ENCODE measurements at regions of chr6 and their contacts with region 1.

Region 1: GRCh38 chr6:42453031-42453653 is 1.4 kb upstream of the TRERF1 start:
- DNase-seq: peak; percentile 57 to 90 (median 75)
- ATAC-seq: peak; percentile 72
- H3K4me3 ChIP-seq: peak overlapping the region; percentile 96
- H3K4me3 Mint-ChIP-seq: peak overlapping the region; percentile 98
- H3K27ac ChIP-seq: peak overlapping the region in 1 of 2 donors; percentile 64
- H3K27ac Mint-ChIP-seq: peak overlapping the region; percentile 86
- H3K4me1 ChIP-seq: peaks cover 36% of the 10 kb centered on the region
- H3K4me1 Mint-ChIP-seq: peaks cover 51% of the 10 kb centered on the region
- H3K27me3 ChIP-seq: no peaks in the 10 kb centered on the region
- H3K27me3 Mint-ChIP-seq: no peaks in the 10 kb centered on the region
- CTCF ChIP-seq: no peak

Region 2: DNA sequence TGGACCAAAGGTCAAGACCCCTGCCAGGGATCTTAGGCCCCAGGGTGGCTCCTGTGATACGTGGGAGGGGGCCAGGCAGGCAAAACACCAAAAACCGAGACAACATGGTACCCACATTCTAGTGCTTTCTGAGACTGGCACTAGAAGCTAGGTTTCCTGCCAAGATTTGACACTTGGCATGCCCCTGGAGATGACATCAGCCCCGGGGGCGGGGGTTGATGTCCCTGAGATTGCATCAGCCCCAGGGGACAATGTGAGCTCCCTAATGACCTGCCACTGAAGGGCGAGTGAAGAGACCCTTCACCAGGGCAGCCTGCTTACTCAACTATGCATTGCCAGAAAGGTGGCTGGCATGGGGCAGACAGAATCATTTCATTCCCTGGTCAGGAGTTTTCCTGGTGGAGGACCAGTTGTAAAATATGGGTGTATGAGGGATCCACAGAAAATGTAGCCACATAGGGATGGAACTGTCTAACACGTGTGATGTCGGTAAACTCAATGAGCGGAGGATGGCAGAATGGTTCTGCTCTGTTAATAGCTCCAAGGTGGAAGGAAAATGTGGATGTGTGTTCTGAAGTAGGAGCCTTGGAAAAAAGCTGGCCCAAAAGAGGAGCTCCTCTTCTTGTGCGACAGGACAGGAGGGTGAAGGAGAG is 1633.8 kb before region 1 on chr6:
- CTCF ChIA-PET with region 1: no interaction called
- POLR2A ChIA-PET with region 1: no interaction called
- intact Hi-C with region 1: no loop called
- DNase-seq: no peak
- ATAC-seq: no peak
- H3K4me3 ChIP-seq: no peak overlapping the region
- H3K4me3 Mint-ChIP-seq: no peak overlapping the region
- H3K27ac ChIP-seq: no peak overlapping the region
- H3K27ac Mint-ChIP-seq: no peak overlapping the region
- H3K4me1 ChIP-seq: no peaks in the 10 kb centered on the region
- H3K4me1 Mint-ChIP-seq: no peaks in the 10 kb centered on the region
- H3K27me3 ChIP-seq: peaks cover 3 to 8% of the 10 kb centered on the region in 2 experiments
- H3K27me3 Mint-ChIP-seq: peaks cover 2% of the 10 kb centered on the region
- CTCF ChIP-seq: no peak

Region 3: GRCh38 chr6:42304053-42304712 is 149.0 kb before region 1 on chr6:
- CTCF ChIA-PET with region 1: no interaction called
- POLR2A ChIA-PET with region 1: interaction called, 3 read pairs
- intact Hi-C with region 1: loop called in 1 of 2 experiments (anchors 10 kb)
- DNase-seq: no peak
- ATAC-seq: no peak
- H3K4me3 ChIP-seq: no peak overlapping the region
- H3K4me3 Mint-ChIP-seq: no peak overlapping the region
- H3K27ac ChIP-seq: no peak overlapping the region
- H3K27ac Mint-ChIP-seq: peak overlapping the region; percentile 18
- H3K4me1 ChIP-seq: peaks cover 6% of the 10 kb centered on the region
- H3K4me1 Mint-ChIP-seq: peaks cover 56% of the 10 kb centered on the region
- H3K27me3 ChIP-seq: no peaks in the 10 kb centered on the region
- H3K27me3 Mint-ChIP-seq: no peaks in the 10 kb centered on the region
- CTCF ChIP-seq: no peak

Region 4: GRCh38 chr6:42315991-42316378 is 137.2 kb before region 1 on chr6:
- CTCF ChIA-PET with region 1: no interaction called
- POLR2A ChIA-PET with region 1: no interaction called
- intact Hi-C with region 1: no loop called
- DNase-seq: peak in 2 of 14 experiments; percentile 55 to 70
- ATAC-seq: no peak
- H3K4me3 ChIP-seq: no peak overlapping the region
- H3K4me3 Mint-ChIP-seq: no peak overlapping the region
- H3K27ac ChIP-seq: no peak overlapping the region
- H3K27ac Mint-ChIP-seq: peak overlapping the region; percentile 75
- H3K4me1 ChIP-seq: peaks cover 37% of the 10 kb centered on the region
- H3K4me1 Mint-ChIP-seq: peaks cover 60% of the 10 kb centered on the region
- H3K27me3 ChIP-seq: no peaks in the 10 kb centered on the region
- H3K27me3 Mint-ChIP-seq: no peaks in the 10 kb centered on the region
- CTCF ChIP-seq: no peak

Region 5: GRCh38 chr6:42374018-42374659 is 79.0 kb before region 1 on chr6:
- CTCF ChIA-PET with region 1: no interaction called
- POLR2A ChIA-PET with region 1: interaction called, 14 read pairs
- intact Hi-C with region 1: loop called in 1 of 2 experiments (anchors 5 kb)
- DNase-seq: peak in 2 of 14 experiments; percentile 42 to 64
- ATAC-seq: peak; percentile 67
- H3K4me3 ChIP-seq: no peak overlapping the region
- H3K4me3 Mint-ChIP-seq: peak overlapping the region; percentile 55
- H3K27ac ChIP-seq: peak overlapping the region in 1 of 2 donors; percentile 3
- H3K27ac Mint-ChIP-seq: peak overlapping the region; percentile 93
- H3K4me1 ChIP-seq: peaks cover 61% of the 10 kb centered on the region
- H3K4me1 Mint-ChIP-seq: peaks cover 67% of the 10 kb centered on the region
- H3K27me3 ChIP-seq: no peaks in the 10 kb centered on the region
- H3K27me3 Mint-ChIP-seq: no peaks in the 10 kb centered on the region
- CTCF ChIP-seq: no peak

Region 6: DNA sequence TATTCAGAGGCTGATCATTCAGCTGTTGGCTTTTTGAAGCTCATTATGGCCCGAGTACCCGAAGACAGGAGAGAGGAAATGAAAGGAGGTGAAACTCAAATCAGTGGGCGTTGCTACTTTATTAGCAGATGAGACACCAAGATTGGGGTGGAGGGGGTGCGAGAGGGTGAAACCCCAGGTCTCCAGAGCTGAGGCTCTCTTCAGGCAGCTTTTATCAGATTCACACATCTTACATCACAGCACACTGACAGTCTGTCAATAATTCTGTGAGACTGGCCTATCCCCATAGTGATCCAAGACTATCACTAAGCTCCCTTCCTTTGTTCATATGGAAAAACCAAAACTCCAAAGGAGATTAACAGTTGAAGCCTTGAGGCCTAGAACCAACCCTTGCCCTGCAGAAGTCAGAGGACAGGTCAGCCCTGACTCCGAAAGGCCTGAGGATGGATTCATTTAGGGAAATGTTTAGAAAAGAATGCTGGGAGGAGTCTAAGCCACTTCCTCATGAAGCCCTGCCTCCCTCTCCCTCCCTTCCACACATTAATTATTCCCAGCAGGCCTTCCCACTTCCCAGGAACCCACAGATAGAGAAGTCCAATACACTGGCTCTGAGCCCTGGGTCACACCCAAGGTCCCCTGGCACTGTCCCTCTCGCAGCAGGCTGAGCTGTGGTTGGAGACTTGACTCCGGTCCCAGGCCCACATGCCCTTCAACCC is 24.7 kb before region 1 on chr6:
- CTCF ChIA-PET with region 1: interaction called, 4 read pairs
- POLR2A ChIA-PET with region 1: interaction called, 16 read pairs
- intact Hi-C with region 1: no loop called
- DNase-seq: peak in 8 of 14 experiments; percentile 16 to 78 (median 44)
- ATAC-seq: peak; percentile 73
- H3K4me3 ChIP-seq: no peak overlapping the region
- H3K4me3 Mint-ChIP-seq: peak overlapping the region; percentile 61
- H3K27ac ChIP-seq: peak overlapping the region; percentile 24 to 52
- H3K27ac Mint-ChIP-seq: peak overlapping the region; percentile 87
- H3K4me1 ChIP-seq: peaks cover 47% of the 10 kb centered on the region
- H3K4me1 Mint-ChIP-seq: peaks cover 70% of the 10 kb centered on the region
- H3K27me3 ChIP-seq: no peaks in the 10 kb centered on the region
- H3K27me3 Mint-ChIP-seq: no peaks in the 10 kb centered on the region
- CTCF ChIP-seq: no peak

Region 7: GRCh38 chr6:42498473-42499128 is 45.5 kb after region 1 on chr6:
- CTCF ChIA-PET with region 1: no interaction called
- POLR2A ChIA-PET with region 1: no interaction called
- intact Hi-C with region 1: no loop called
- DNase-seq: no peak
- ATAC-seq: no peak
- H3K4me3 ChIP-seq: no peak overlapping the region
- H3K4me3 Mint-ChIP-seq: no peak overlapping the region
- H3K27ac ChIP-seq: no peak overlapping the region
- H3K27ac Mint-ChIP-seq: no peak overlapping the region
- H3K4me1 ChIP-seq: no peaks in the 10 kb centered on the region
- H3K4me1 Mint-ChIP-seq: no peaks in the 10 kb centered on the region
- H3K27me3 ChIP-seq: no peaks in the 10 kb centered on the region
- H3K27me3 Mint-ChIP-seq: no peaks in the 10 kb centered on the region
- CTCF ChIP-seq: no peak

Region 8: GRCh38 chr6:42532038-42532669 is 79.0 kb after region 1 on chr6:
- CTCF ChIA-PET with region 1: interaction called, 3 read pairs
- POLR2A ChIA-PET with region 1: interaction called, 8 read pairs
- intact Hi-C with region 1: loop called in 1 of 2 experiments (anchors 5 kb)
- DNase-seq: peak in 5 of 14 experiments; percentile 5 to 73 (median 62)
- ATAC-seq: peak; percentile 54
- H3K4me3 ChIP-seq: no peak overlapping the region
- H3K4me3 Mint-ChIP-seq: no peak overlapping the region
- H3K27ac ChIP-seq: no peak overlapping the region
- H3K27ac Mint-ChIP-seq: no peak overlapping the region
- H3K4me1 ChIP-seq: no peaks in the 10 kb centered on the region
- H3K4me1 Mint-ChIP-seq: no peaks in the 10 kb centered on the region
- H3K27me3 ChIP-seq: no peaks in the 10 kb centered on the region
- H3K27me3 Mint-ChIP-seq: no peaks in the 10 kb centered on the region
- CTCF ChIP-seq: peak; percentile 91

Measured in CD4-positive, alpha-beta T cell (primary cell).